CD8-positive, alpha-beta T cell (primary cell): ENCODE measurements at regions of chr6 and their contacts with region 1.

Region 1: DNA sequence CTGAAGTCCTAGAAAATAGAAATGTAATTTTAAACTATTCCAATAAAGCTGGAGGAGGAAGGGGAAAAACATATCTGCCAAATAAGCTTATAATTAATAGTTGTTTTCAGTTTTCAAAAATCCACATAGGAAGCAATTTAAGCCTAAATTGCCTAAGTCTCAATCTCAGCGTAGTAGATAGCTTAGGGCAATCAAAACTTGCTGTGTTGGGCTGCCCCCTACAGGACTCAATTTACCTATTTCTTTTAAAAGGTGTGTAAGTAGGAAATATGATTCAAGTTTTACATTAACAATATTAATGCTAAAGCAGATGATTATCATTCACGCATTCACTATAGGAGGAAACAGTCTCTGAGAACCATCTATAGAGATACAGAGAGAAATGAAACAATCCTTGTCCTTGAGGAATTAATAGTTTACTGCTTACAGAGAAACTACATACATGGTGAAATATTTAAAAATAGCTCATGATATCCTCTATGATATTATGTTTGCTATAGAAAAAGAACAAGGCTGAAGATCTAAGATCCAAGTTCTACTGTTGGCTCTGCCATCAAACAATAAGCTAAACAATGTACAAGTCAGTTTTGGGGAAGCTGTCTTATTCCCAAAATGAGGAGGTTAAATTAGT is 102.1 kb downstream of the ATG5 start:
- DNase-seq: peak; percentile 39 to 85 (median 74)
- ATAC-seq: peak; percentile 84
- H3K4me3 ChIP-seq: no peak overlapping the region
- H3K4me3 Mint-ChIP-seq: no peak overlapping the region
- H3K27ac ChIP-seq: no peak overlapping the region
- H3K27ac Mint-ChIP-seq: no peak overlapping the region
- H3K4me1 ChIP-seq: no peaks in the 10 kb centered on the region
- H3K4me1 Mint-ChIP-seq: peaks cover 6% of the 10 kb centered on the region
- H3K27me3 ChIP-seq: no peaks in the 10 kb centered on the region
- H3K27me3 Mint-ChIP-seq: no peaks in the 10 kb centered on the region
- CTCF ChIP-seq: peak; percentile 84

Region 2: GRCh38 chr6:105431226-105431625 is 792.2 kb before region 1 on chr6:
- CTCF ChIA-PET with region 1: interaction called, 33 read pairs
- POLR2A ChIA-PET with region 1: no interaction called
- intact Hi-C with region 1: loop called (anchors 1 kb)
- DNase-seq: peak in 3 of 9 experiments; percentile 21 to 74 (median 68)
- ATAC-seq: no peak
- H3K4me3 ChIP-seq: no peak overlapping the region
- H3K4me3 Mint-ChIP-seq: no peak overlapping the region
- H3K27ac ChIP-seq: no peak overlapping the region
- H3K27ac Mint-ChIP-seq: no peak overlapping the region
- H3K4me1 ChIP-seq: no peaks in the 10 kb centered on the region
- H3K4me1 Mint-ChIP-seq: no peaks in the 10 kb centered on the region
- H3K27me3 ChIP-seq: no peaks in the 10 kb centered on the region
- H3K27me3 Mint-ChIP-seq: no peaks in the 10 kb centered on the region
- CTCF ChIP-seq: peak; percentile 79

Region 3: DNA sequence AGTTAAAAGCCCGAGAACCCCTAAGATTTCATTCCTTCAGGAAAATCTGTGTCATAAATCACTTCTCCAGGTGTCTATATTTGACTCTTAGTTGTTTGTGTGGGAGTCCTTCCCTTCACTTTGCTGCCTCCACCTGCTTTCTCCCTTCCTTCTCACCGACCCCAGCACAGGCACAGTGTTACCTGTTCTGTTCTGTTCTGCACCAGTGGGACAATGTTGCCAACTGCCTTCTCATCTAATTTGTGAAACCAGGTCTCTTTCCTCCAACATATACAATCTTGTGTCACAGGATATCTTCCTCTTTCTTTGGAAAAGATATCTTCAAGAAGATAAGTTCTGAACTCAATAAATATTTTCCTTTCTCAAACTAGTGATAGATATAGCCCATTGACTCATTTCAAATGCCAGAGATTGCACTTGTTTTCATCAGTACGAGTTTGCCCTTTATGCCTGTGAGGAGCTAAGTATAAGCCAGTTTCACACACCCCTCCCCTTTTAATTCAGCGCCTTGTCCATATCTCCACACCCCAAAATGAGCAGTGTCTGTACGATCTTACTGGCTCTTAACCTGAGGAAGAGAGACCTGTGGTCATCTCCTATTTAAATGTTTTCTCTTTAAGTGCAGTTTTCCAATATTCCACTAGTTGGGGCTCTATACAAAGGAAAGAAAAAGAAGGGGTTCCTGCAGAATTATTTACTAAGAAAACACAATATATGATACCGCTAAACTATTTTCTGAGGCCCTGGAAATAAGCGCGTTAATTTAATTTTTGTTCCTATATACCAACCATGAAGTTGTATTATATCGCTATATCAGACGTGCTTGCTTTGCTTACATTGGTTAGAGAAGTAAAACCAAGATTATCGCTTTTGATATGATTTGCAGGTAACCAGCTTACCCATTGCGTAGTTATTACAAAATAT is 738.9 kb before region 1 on chr6:
- CTCF ChIA-PET with region 1: interaction called, 17 read pairs
- POLR2A ChIA-PET with region 1: no interaction called
- intact Hi-C with region 1: loop called (anchors 1 kb)
- DNase-seq: peak in 2 of 9 experiments; percentile 56 to 64
- ATAC-seq: peak; percentile 50
- H3K4me3 ChIP-seq: no peak overlapping the region
- H3K4me3 Mint-ChIP-seq: peak overlapping the region; percentile 60
- H3K27ac ChIP-seq: peak overlapping the region in 1 of 2 experiments; percentile 18
- H3K27ac Mint-ChIP-seq: peak overlapping the region; percentile 86
- H3K4me1 ChIP-seq: no peaks in the 10 kb centered on the region
- H3K4me1 Mint-ChIP-seq: peaks cover 24% of the 10 kb centered on the region
- H3K27me3 ChIP-seq: no peaks in the 10 kb centered on the region
- H3K27me3 Mint-ChIP-seq: peaks cover 2% of the 10 kb centered on the region
- CTCF ChIP-seq: peak; percentile 85

Region 4: GRCh38 chr6:105733565-105734162 is 489.8 kb before region 1 on chr6:
- CTCF ChIA-PET with region 1: interaction called, 16 read pairs
- POLR2A ChIA-PET with region 1: interaction called, 3 read pairs
- intact Hi-C with region 1: loop called (anchors 1 kb)
- DNase-seq: peak in 2 of 9 experiments; percentile 53 to 64
- ATAC-seq: no peak
- H3K4me3 ChIP-seq: no peak overlapping the region
- H3K4me3 Mint-ChIP-seq: no peak overlapping the region
- H3K27ac ChIP-seq: no peak overlapping the region
- H3K27ac Mint-ChIP-seq: no peak overlapping the region
- H3K4me1 ChIP-seq: no peaks in the 10 kb centered on the region
- H3K4me1 Mint-ChIP-seq: peaks cover 7% of the 10 kb centered on the region
- H3K27me3 ChIP-seq: no peaks in the 10 kb centered on the region
- H3K27me3 Mint-ChIP-seq: no peaks in the 10 kb centered on the region
- CTCF ChIP-seq: peak; percentile 73

Region 5: GRCh38 chr6:105793130-105793529 is 430.3 kb before region 1 on chr6:
- CTCF ChIA-PET with region 1: interaction called, 3 read pairs
- POLR2A ChIA-PET with region 1: interaction called, 3 read pairs
- intact Hi-C with region 1: loop called in 1 of 2 experiments (anchors 1 kb)
- DNase-seq: peak in 2 of 9 experiments; percentile 29 to 41
- ATAC-seq: no peak
- H3K4me3 ChIP-seq: no peak overlapping the region
- H3K4me3 Mint-ChIP-seq: no peak overlapping the region
- H3K27ac ChIP-seq: no peak overlapping the region
- H3K27ac Mint-ChIP-seq: no peak overlapping the region
- H3K4me1 ChIP-seq: no peaks in the 10 kb centered on the region
- H3K4me1 Mint-ChIP-seq: peaks cover 4% of the 10 kb centered on the region
- H3K27me3 ChIP-seq: no peaks in the 10 kb centered on the region
- H3K27me3 Mint-ChIP-seq: peaks cover 5% of the 10 kb centered on the region
- CTCF ChIP-seq: no peak

Region 6: DNA sequence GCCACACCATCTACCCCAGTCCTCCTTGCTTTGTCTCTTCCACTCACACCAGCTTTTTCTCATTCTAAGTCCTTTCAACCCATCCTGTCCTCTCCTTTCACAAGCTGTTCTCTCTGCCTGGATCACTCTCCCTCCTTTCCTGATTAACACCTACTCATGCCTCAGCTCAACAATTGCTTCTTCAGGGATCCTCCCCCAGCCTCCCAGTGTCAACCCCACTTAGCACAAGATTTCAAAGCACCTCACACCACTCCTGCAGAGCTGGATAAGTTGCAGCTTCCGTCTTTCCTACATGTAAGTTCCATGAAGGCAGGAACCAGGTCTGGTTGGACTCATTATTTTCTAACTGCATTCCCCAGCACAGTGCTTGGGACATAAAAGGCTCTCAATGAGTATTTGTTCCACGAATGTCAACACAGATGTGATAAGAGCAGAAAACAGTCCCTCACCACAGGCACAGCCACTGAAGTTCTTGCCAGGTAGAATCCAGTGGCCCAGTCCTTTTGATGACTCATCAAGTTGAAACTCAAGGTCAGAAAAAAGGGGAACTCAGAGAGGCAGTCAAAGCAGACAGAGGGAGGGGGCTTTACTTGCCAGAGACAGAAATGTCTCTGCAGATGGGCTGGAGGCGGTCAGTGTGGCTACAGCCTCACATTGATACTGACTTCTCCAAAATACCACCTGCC is 330.7 kb before region 1 on chr6:
- CTCF ChIA-PET with region 1: no interaction called
- POLR2A ChIA-PET with region 1: no interaction called
- intact Hi-C with region 1: loop called in 1 of 2 experiments (anchors 10 kb)
- DNase-seq: peak in 1 of 9 experiments; percentile 15
- ATAC-seq: no peak
- H3K4me3 ChIP-seq: no peak overlapping the region
- H3K4me3 Mint-ChIP-seq: no peak overlapping the region
- H3K27ac ChIP-seq: no peak overlapping the region
- H3K27ac Mint-ChIP-seq: no peak overlapping the region
- H3K4me1 ChIP-seq: no peaks in the 10 kb centered on the region
- H3K4me1 Mint-ChIP-seq: no peaks in the 10 kb centered on the region
- H3K27me3 ChIP-seq: no peaks in the 10 kb centered on the region
- H3K27me3 Mint-ChIP-seq: no peaks in the 10 kb centered on the region
- CTCF ChIP-seq: no peak

Region 7: DNA sequence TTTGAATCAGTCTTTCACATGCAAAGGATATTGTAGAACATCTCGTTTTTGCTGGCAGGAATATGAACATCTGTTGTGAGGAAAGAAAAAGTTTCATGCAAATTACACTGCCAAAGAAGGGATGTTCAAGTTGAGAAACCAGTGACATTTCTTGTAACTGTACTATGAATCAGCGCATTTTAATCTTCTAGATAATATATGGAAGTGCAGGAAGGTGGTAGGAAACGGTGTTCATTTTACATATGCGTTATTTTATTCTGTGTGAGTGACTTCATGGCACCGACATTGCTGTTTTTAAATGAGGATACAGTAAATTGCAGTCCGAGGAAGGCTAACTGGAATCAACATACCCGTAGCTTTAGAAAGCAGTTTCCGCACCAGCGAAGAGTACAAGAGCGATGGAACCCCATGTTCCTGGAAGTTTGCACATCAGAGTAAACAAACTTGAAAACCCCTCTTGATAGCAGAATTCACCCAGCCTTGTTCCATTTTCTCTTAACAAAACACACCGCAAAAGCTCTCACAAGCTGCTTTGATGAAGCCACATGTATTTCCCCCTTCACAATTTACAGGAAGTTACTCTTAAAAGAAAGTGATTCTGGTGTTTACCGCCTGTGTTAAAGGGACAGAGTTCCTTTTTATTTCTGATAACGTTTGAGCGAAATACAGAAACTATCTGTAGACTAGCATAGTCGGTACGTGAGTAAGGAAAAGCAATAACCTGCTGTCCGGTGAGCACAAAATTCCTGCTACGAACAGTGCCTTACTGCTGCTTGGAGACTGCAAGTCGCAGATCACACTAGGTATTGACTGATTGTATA is 125.8 kb before region 1 on chr6:
- CTCF ChIA-PET with region 1: interaction called, 18 read pairs
- POLR2A ChIA-PET with region 1: interaction called, 3 read pairs
- intact Hi-C with region 1: no loop called
- DNase-seq: peak in 7 of 9 experiments; percentile 37 to 93 (median 66)
- ATAC-seq: peak; percentile 65
- H3K4me3 ChIP-seq: peak overlapping the region; percentile 49 to 73
- H3K4me3 Mint-ChIP-seq: peak overlapping the region; percentile 90
- H3K27ac ChIP-seq: peak overlapping the region; percentile 42 to 79
- H3K27ac Mint-ChIP-seq: peak overlapping the region; percentile 92
- H3K4me1 ChIP-seq: peaks cover 39% of the 10 kb centered on the region
- H3K4me1 Mint-ChIP-seq: peaks cover 75% of the 10 kb centered on the region
- H3K27me3 ChIP-seq: no peaks in the 10 kb centered on the region
- H3K27me3 Mint-ChIP-seq: peaks cover 4% of the 10 kb centered on the region
- CTCF ChIP-seq: no peak